ENCODE measurements at regions of chr22 and their contacts with region 1.

Region 1: GRCh38 chr22:41285820-41286638 is at the start of gene RANGAP1:
- DNase-seq: peak; percentile 96
- ATAC-seq: peak; percentile 92
- H3K4me3 ChIP-seq: peak within 1 kb of the TSS; percentile 96
- H3K27ac ChIP-seq: peak within 1 kb of the TSS; percentile 90
- H3K4me1 ChIP-seq: peaks cover 45% of the 10 kb centered on the region
- H3K27me3 ChIP-seq: no peaks in the 10 kb centered on the region
- CTCF ChIP-seq: no peak
- total RNA-seq, gene RANGAP1: 99.0 and 128 TPM in 2 replicates

Region 2: GRCh38 chr22:41240377-41241132 is 45.5 kb before region 1 on chr22 and contains the start of gene CHADL:
- CTCF ChIA-PET with region 1: no interaction called
- POLR2A ChIA-PET with region 1: no interaction called
- intact Hi-C with region 1: no loop called
- DNase-seq: no peak
- ATAC-seq: no peak
- H3K4me3 ChIP-seq: no peak within 1 kb of the TSS
- H3K27ac ChIP-seq: no peak within 1 kb of the TSS
- H3K4me1 ChIP-seq: 0 out of 2 replicates have a peak, but pooled peaks cover 3% of the 10 kb centered on the region
- H3K27me3 ChIP-seq: no peaks in the 10 kb centered on the region
- CTCF ChIP-seq: no peak
- total RNA-seq, gene CHADL: 0.63 and 1.2 TPM in 2 replicates

Region 3: DNA sequence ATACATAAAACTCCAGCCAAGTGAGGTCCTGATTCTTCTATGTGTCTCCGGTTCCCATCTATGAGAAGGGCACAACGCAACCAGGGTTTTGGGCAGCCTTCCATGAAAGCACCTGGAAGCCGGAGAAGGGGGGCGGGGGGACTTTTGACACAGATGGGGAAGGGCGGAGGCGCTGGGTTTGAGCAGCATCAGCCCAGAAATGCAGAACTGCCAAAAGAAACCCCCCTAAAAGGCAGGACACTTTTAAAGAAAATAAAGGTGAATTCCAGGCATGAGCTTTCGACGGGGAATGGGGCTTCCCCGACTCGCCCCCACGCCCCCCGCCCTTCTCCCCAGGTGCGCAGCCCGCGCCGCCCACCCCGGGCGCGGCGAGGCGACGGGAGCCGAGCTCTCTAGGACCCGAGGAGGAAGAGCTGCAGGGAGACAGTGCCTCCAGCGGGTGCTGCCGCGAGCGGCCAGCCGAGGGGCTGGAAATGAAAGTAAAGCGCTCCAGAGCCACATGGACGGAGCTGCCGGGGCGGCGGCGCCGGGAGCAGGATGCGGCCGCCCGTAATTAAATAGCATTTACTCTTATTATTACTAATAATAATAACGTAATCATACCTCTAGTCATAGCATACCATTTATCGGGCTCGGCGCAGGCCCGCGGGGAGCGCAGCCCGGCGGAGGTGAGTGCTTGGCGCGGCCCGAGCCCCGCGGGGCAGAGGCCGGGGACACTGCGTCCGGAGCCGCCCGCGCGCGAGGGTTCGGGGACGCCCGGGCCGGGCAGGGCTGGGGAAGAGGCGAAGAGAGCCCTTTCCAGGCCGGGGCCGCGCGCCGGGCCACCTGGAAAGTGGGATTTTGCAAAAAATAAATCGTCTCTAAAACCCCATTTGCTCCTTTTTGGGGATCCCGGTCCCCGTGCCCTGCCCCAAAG is 15.3 kb after region 1 on chr22 and contains the start of gene ZC3H7B:
- CTCF ChIA-PET with region 1: no interaction called
- POLR2A ChIA-PET with region 1: no interaction called
- intact Hi-C with region 1: loop called (anchors 1 kb)
- DNase-seq: peak; percentile 77
- ATAC-seq: peak; percentile 84
- H3K4me3 ChIP-seq: peak within 1 kb of the TSS; percentile 95
- H3K27ac ChIP-seq: peak within 1 kb of the TSS; percentile 55
- H3K4me1 ChIP-seq: peaks cover 21% of the 10 kb centered on the region
- H3K27me3 ChIP-seq: no peaks in the 10 kb centered on the region
- CTCF ChIP-seq: peak; percentile 48
- total RNA-seq, gene ZC3H7B: 34.8 and 40.5 TPM in 2 replicates

Measured in PC-3 (cell line).